Posterior cingulate gyrus (tissue), 11 donors: ENCODE measurements at regions of chr14 and their contacts with region 1.

Region 1: DNA sequence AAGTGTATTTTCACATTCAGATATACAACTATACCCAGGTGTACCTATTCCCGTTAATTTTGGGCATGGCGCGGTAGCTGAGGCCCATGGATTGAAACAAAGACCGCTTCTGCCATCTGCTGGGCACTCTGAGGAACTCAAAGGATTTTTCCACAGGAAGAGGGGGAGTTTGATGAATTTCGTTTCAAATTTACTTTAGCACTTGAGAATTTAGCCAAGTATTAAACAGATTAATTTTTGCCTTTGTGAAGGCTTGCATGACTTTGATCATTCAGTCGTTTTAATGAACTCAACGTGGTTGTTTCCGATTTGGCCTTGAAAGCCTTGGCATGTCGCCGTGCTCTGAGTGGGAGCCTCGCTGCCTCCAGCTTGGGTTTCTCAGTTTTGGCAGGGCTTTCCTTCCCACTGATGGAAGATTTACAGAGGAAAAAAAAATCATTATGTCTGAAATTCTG is 153.2 kb upstream of the DDHD1 start:
- DNase-seq: peak; percentile 43 to 93 (median 63)

Region 2: DNA sequence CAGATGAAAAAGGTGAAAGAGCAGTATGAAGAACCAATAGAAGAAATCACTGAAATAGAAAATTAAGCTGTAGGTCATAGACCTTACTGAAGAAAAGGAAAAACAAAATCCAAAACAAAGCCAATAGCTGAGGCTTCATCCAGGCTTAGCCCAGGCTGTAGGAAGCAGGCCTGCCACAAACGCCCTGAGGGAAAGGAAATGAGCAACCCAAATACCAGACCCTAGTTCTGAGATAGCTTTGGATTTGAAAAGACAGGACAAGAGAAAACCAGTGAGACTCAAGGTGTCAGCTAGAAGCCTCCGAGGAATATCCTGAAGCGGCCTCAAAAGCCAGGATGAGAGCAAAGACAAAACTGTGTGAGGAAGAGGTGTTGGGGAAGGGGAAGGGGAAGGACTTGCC is 434.7 kb before region 1 on chr14:
- intact Hi-C with region 1: no loop called
- DNase-seq: no peak

Region 3: GRCh38 chr14:53055003-53055402 is 251.3 kb before region 1 on chr14:
- intact Hi-C with region 1: loop called (anchors 10 kb)
- DNase-seq: no peak

Region 4: DNA sequence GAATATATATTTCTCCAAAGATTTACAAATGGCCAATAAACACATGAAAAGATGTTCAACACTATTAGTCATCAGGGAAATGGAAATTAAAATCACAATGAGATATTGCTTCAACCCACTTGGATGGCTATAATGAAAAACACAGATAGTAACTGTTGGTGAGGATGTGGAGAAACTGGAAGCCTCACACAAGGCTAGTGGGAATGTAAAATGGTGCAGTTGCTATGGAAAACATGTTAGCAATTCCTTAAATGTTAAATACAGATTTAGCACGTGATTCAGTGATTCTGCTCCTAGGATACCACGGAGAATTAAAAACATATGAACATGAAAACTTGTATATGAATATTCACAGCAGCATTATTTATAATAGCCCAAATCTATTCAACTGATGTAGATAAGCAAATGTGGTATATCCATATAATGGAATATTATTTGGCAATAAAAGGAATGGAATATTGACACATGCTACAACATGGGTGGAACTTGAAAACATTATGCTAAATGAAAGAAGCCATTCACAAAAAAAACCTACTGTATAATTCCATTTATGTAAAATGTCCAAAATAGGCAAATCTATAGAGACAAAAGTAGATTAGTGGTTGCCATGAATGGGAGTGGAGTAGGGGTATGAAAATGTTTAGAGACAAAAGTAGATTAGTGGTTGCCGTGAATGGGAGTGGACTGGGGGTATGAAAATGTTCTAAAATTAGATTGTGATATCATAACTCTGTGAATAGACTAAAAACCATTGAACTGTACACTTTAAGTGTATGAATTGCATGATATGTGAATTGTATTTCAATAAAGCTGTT is 74.0 kb after region 1 on chr14:
- intact Hi-C with region 1: no loop called
- DNase-seq: no peak

Region 5: GRCh38 chr14:53391151-53391550 is 84.9 kb after region 1 on chr14:
- intact Hi-C with region 1: no loop called
- DNase-seq: no peak